Activated CD4-positive, alpha-beta memory T cell treated with anti-CD3 and anti-CD28 coated beads, Interleukin-2, amount 10 ng/mL, durations not matched to agents 7 days and 5 days (primary cell): ENCODE measurements at regions of chr16 and their contacts with region 1.

Region 1: DNA sequence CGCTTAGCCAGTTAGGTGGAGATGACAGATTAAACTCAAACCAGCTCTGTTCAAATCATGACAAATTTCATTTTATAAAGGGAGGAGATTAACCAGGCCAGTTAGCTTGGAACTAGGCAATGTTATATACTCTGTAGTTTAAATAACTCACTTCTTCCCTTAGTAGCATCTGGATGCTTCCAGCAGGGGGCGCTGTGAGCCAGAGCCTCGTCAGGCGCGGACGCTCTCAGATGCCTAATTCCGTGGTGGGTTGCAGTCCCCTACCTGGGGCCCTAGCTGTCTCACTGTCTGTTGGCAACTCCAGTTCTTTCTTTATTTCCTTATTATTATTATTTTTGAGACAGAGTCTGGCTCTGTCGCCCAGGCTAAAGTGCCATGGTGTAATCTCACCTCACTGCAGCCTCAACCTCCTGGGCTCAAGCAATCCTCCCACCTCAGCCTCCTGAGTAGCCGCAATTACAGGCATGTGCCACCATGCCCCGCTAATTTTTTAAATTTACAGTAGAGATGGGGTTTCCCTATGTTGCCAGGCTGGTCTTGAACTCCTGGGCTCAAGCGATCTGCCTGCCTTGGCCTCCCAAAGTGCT is 17.3 kb upstream of the WFDC1 start:
- DNase-seq: peak; percentile 73
- H3K4me3 Mint-ChIP-seq: no peak overlapping the region
- H3K27ac Mint-ChIP-seq: no peak overlapping the region
- H3K4me1 Mint-ChIP-seq: no peaks in the 10 kb centered on the region
- H3K27me3 Mint-ChIP-seq: peaks cover 7% of the 10 kb centered on the region

Region 2: GRCh38 chr16:84254062-84254461 is 23.3 kb before region 1 on chr16:
- CTCF ChIA-PET with region 1: interaction called, 10 read pairs
- POLR2A ChIA-PET with region 1: no interaction called
- DNase-seq: no peak
- H3K4me3 Mint-ChIP-seq: no peak overlapping the region
- H3K27ac Mint-ChIP-seq: no peak overlapping the region
- H3K4me1 Mint-ChIP-seq: no peaks in the 10 kb centered on the region
- H3K27me3 Mint-ChIP-seq: peaks cover 31% of the 10 kb centered on the region

Region 3: DNA sequence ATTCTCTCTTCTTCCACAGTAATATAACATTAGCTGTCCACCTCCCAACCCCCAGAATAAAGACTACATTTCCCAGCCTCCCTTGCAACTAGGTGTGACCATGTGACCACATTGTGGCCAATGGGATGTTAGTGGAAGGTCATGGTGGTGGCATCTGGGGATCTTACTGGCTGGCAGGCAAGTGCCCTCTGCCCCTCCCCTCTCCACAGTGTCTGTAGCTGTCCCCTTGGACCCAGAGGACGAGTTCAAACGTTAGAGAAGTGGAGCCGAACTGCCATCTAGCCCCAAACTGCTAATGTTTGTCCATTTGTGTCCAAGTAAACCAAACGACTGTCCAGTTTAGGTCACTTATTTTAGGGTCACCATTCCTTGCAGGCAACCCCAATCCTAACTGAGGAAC is 10.9 kb before region 1 on chr16:
- CTCF ChIA-PET with region 1: interaction called, 19 read pairs
- POLR2A ChIA-PET with region 1: no interaction called
- DNase-seq: peak; percentile 24
- H3K4me3 Mint-ChIP-seq: no peak overlapping the region
- H3K27ac Mint-ChIP-seq: no peak overlapping the region
- H3K4me1 Mint-ChIP-seq: no peaks in the 10 kb centered on the region
- H3K27me3 Mint-ChIP-seq: peaks cover 3% of the 10 kb centered on the region